ENCODE measurements at regions of chr12 and their contacts with region 1.

Region 1: GRCh38 chr12:13100882-13101769 is 2.3 kb downstream of the GSG1 start:
- DNase-seq: peak; percentile 47
- ATAC-seq: peak; percentile 90
- H3K4me3 ChIP-seq: peak overlapping the region; percentile 63 to 82 (median 69)
- H3K27ac ChIP-seq: no peak overlapping the region
- H3K4me1 ChIP-seq: peaks cover 40% of the 10 kb centered on the region
- H3K27me3 ChIP-seq: peaks cover 0 to 42% of the 10 kb centered on the region in 2 experiments; a peak in 3 of 5 replicates
- CTCF ChIP-seq: no peak
- EP300 ChIP-seq: no peak
- POLR2A ChIP-seq: no peak
- RAD21 ChIP-seq: 0 out of 2 replicates have a peak, but pooled peaks have one; percentile 19

Region 2: DNA sequence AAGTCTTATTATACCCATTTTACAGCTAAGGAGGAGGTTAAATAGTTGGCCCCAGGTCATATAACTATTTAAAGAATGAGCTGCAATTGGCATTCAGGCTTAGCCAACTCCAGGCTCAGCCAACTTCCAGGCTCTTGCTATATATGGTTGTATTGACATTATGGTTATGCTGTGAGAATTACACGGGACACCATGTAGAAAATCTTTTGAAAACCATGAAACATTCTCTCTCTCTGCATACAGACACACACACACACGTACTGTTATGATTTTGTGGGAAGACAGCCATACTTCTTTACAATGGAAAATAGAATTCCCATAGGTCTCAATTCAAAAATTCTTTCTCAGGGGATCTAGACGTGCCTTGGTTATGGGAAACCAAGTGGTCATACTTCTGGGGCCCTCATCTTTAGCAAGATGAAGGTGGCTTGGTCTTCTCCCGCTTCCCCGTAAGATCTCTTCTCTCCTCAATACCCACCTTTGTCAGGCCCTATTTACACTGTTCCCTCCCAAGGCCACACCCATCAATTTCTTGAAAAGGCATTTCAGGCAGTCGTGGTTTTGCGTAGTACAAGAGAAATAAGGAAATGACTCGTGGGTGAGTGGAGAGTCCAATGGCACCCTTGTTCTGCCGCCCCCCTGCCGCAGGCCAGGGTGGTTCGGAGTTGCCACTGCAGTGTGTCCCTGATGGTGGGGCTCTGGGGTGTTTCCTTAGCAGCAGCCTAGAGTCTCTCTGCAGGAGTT is 219.8 kb before region 1 on chr12:
- CTCF ChIA-PET with region 1: no interaction called
- POLR2A ChIA-PET with region 1: no interaction called
- in situ Hi-C with region 1: no loop called
- intact Hi-C with region 1: no loop called
- DNase-seq: peak; percentile 39
- ATAC-seq: no peak
- H3K4me3 ChIP-seq: no peak overlapping the region
- H3K27ac ChIP-seq: no peak overlapping the region
- H3K4me1 ChIP-seq: peaks cover 44% of the 10 kb centered on the region
- H3K27me3 ChIP-seq: peaks cover 3 to 10% of the 10 kb centered on the region in 2 experiments; a peak in 4 of 5 replicates
- CTCF ChIP-seq: no peak
- EP300 ChIP-seq: no peak
- POLR2A ChIP-seq: no peak
- RAD21 ChIP-seq: no peak

Region 3: GRCh38 chr12:12927211-12928079 is 173.7 kb before region 1 on chr12:
- CTCF ChIA-PET with region 1: no interaction called
- POLR2A ChIA-PET with region 1: no interaction called
- in situ Hi-C with region 1: no loop called
- intact Hi-C with region 1: loop called (anchors 10 kb)
- DNase-seq: peak; percentile 95
- ATAC-seq: peak; percentile 97
- H3K4me3 ChIP-seq: peak overlapping the region; percentile 50 to 89 (median 72)
- H3K27ac ChIP-seq: peak overlapping the region; percentile 76
- H3K4me1 ChIP-seq: peaks cover 15% of the 10 kb centered on the region
- H3K27me3 ChIP-seq: no peaks in the 10 kb centered on the region
- CTCF ChIP-seq: no peak
- EP300 ChIP-seq: no peak
- POLR2A ChIP-seq: peak; percentile 86 to 95
- RAD21 ChIP-seq: no peak

Region 4: DNA sequence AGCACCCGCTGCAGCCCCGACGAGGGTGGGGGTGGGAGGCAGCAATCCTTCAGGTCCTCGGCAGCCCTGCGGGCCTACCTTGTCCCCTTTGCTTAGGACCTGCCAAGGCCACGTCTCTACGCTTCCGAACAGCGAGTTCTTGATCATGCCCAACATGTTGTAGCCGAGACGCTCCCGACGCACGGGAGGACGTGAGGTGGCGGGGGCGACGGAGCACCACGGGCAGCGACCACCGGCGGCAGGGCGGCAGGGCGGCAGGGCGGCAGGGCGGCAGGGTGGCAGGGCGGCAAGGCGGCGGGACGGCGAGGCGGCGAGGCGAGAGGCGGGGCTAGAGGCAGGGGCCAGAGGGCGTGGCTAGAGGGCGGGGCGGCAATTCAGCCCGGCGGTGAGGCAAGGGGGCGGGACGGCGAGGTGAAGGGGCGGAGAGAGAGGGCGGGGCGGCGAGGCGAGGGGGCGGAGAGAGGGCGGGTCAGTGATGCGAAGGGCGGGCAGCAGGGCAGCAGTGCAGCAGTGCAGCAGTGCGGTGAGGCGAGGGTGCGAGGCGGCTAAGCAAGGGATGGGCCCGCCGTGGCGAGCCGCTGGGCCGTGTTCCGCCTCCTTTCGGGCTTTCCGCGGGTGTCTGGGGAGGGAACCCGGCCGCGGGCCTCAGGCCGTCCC is 101.0 kb before region 1 on chr12 and contains the start of gene HEBP1:
- CTCF ChIA-PET with region 1: no interaction called
- POLR2A ChIA-PET with region 1: no interaction called
- in situ Hi-C with region 1: no loop called
- intact Hi-C with region 1: loop called (anchors 5 kb)
- DNase-seq: peak; percentile 59
- ATAC-seq: peak; percentile 90
- H3K4me3 ChIP-seq: peak within 1 kb of the TSS; percentile 74 to 85 (median 84)
- H3K27ac ChIP-seq: peak within 1 kb of the TSS; percentile 52
- H3K4me1 ChIP-seq: peaks cover 27% of the 10 kb centered on the region
- H3K27me3 ChIP-seq: no peaks in the 10 kb centered on the region; a peak in 1 of 5 replicates
- CTCF ChIP-seq: no peak
- EP300 ChIP-seq: peak in 1 of 2 experiments; percentile 60; a peak in 1 of 4 replicates
- POLR2A ChIP-seq: peak; percentile 61 to 93
- RAD21 ChIP-seq: no peak
- total RNA-seq, gene HEBP1: 7.8 and 19.0 TPM in 2 replicates